ENCODE measurements at regions of chr2 and their contacts with region 1.

Region 1: DNA sequence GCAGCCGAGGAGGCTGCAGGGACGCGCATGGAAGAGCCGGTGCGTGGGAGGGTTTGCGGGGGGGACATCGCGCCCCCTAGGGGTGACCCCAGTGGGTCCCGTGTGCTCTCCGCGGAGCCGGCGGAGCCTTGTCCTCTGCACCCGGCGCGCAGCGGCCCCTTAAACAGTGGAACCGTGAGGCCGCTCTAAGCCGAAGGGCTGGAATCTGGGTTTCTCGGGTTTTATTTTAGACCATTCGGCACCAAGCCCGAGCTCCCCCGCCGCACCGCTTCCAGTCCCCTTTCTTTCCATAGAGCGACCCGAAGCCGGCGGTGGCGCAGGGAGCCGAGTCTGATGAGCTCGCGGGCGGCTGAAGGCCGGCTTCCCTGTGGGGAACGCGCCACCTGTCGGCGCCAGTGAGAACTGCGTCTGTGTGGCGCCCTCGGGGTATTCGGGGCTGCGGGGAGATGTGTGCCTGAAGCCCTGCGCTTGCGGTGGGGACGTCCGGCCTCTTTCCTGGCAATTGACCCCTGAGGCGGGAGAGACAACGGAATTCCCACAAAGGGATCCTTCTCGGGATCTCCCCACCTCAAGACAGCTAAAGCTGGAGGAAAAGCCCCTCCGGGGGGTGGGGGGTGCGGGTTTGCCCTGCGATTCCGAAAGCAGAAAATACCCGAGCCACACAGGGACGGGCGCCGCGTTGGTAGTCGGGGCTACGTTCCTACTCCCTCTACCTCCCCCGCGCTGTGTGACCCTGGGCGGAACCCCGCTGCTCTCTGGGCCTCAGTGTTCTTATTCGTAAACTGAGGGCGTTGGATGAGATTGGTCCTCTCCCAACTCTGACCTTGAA is 8.2 kb upstream of the EN1 start:
- DNase-seq: peak; percentile 88
- ATAC-seq: peak; percentile 89
- H3K4me3 ChIP-seq: peak overlapping the region; percentile 72
- H3K27ac ChIP-seq: no peak overlapping the region
- H3K4me1 ChIP-seq: 0 out of 2 replicates have a peak, but pooled peaks cover under 1% of the 10 kb centered on the region
- H3K27me3 ChIP-seq: peaks cover 28% of the 10 kb centered on the region
- CTCF ChIP-seq: peak; percentile 89

Region 2: GRCh38 chr2:118371515-118371914 is 484.1 kb before region 1 on chr2:
- CTCF ChIA-PET with region 1: interaction called, 4 read pairs
- POLR2A ChIA-PET with region 1: no interaction called
- intact Hi-C with region 1: loop called (anchors 2 kb)
- DNase-seq: peak; percentile 75
- ATAC-seq: peak; percentile 92
- H3K4me3 ChIP-seq: no peak overlapping the region
- H3K27ac ChIP-seq: no peak overlapping the region
- H3K4me1 ChIP-seq: peaks cover 19% of the 10 kb centered on the region
- H3K27me3 ChIP-seq: no peaks in the 10 kb centered on the region
- CTCF ChIP-seq: peak; percentile 95

Region 3: GRCh38 chr2:118431165-118431517 is 424.5 kb before region 1 on chr2:
- CTCF ChIA-PET with region 1: interaction called, 11 read pairs
- POLR2A ChIA-PET with region 1: no interaction called
- intact Hi-C with region 1: no loop called
- DNase-seq: peak; percentile 46
- ATAC-seq: peak; percentile 39
- H3K4me3 ChIP-seq: no peak overlapping the region
- H3K27ac ChIP-seq: peak overlapping the region; percentile 91
- H3K4me1 ChIP-seq: peaks cover 22% of the 10 kb centered on the region
- H3K27me3 ChIP-seq: no peaks in the 10 kb centered on the region
- CTCF ChIP-seq: peak; percentile 50

Region 4: GRCh38 chr2:118492335-118492734 is 363.3 kb before region 1 on chr2:
- CTCF ChIA-PET with region 1: interaction called, 5 read pairs
- POLR2A ChIA-PET with region 1: no interaction called
- intact Hi-C with region 1: loop called (anchors 1 kb)
- DNase-seq: peak; percentile 77
- ATAC-seq: peak; percentile 37; the same call in 1 of the 2 replicates
- H3K4me3 ChIP-seq: no peak overlapping the region
- H3K27ac ChIP-seq: no peak overlapping the region
- H3K4me1 ChIP-seq: no peaks in the 10 kb centered on the region
- H3K27me3 ChIP-seq: no peaks in the 10 kb centered on the region; the same call in 1 of the 2 replicates
- CTCF ChIP-seq: peak; percentile 69

Region 5: DNA sequence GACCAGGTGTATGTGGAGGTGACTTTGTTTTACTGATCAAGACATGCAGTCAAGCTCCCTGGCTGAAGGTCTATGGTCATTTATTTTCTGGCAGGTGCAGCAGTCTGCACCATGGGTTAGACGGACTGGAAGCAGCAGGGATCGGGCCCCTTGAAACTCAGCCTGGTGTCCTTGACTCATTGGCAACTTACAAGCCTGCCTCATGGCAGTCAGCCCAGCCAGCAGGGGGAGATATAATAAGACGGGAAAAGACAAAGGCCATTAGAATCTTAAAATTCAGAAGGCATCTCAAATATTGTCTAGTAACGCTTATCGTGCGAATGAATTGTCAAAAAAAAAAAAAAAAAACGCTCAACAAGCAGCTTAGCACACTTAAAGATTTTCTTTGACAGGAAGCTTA is 316.4 kb before region 1 on chr2:
- CTCF ChIA-PET with region 1: no interaction called
- POLR2A ChIA-PET with region 1: no interaction called
- intact Hi-C with region 1: loop called (anchors 5 kb)
- DNase-seq: peak; percentile 57
- ATAC-seq: peak; percentile 27; the same call in 1 of the 2 replicates
- H3K4me3 ChIP-seq: no peak overlapping the region
- H3K27ac ChIP-seq: no peak overlapping the region
- H3K4me1 ChIP-seq: no peaks in the 10 kb centered on the region
- H3K27me3 ChIP-seq: 0 out of 2 replicates have a peak, but pooled peaks cover 11% of the 10 kb centered on the region
- CTCF ChIP-seq: peak; percentile 79

Region 6: DNA sequence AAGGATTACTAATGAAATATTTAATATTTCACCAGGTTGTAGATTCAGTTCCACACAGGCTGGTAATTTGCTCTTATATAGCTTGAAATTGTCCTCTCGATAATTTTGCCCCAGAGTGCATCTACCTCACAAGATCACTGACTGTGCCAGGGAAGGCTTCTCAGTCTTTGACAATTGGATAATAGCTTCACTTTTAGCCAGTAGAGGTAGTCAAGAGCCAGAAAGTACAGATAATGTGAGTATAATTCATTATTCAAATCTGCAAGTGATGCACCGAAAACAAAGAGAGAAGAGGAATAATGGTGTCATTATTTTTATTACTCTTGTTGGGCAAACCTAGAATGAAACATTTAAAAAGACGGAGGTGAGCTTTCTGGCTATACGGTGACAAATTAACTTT is 301.0 kb before region 1 on chr2:
- CTCF ChIA-PET with region 1: interaction called, 10 read pairs
- POLR2A ChIA-PET with region 1: no interaction called
- intact Hi-C with region 1: loop called (anchors 1 kb)
- DNase-seq: peak; percentile 36
- ATAC-seq: peak; percentile 57
- H3K4me3 ChIP-seq: no peak overlapping the region
- H3K27ac ChIP-seq: no peak overlapping the region
- H3K4me1 ChIP-seq: peaks cover 6% of the 10 kb centered on the region; the same call in 1 of the 2 replicates
- H3K27me3 ChIP-seq: no peaks in the 10 kb centered on the region
- CTCF ChIP-seq: peak; percentile 59

Region 7: DNA sequence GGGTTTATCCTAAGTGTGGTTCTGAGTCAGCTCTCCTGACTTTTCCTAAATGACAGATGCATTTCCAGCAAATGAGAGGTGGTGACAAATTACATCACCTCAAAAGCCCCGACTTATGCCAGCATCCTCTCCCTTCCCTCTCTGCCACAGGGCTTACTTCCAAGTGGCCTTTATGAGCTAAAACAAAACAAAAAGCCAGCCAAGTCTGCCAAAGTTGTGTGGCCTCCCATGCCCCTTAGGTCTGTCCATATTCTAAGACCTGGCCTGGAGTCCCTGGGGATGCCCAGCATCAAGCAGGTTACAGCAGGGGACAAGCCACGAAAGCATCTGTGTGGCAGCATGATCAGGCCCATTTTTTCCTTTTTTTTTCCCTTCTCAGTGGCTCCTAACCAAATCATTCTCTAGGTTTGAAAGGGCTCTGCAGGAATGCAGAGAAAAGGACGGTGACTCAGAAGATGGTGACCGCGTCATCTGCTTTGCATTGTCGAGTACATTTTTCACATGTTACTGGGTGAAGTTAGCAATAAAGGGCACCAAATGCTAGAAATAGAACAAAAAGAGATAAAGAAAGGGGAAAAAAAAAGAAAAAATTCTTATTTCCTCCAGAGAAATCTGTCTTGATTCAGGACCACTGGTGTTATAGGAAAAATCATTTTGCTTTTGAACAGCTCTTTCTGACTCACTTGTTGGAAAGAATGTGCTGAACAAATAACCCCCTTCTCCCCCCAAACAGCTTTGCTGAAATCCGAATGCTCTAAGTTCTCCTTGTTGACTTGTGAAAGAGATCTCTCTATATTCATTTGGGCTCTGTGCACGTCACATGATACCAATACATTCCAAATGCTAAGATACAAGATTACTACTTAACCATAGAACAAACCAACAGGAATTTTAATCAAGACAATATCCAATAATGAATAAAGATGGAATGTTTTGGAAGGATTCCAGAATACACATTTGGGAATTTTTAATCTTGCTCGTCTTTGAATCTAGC is 186.9 kb before region 1 on chr2:
- CTCF ChIA-PET with region 1: no interaction called
- POLR2A ChIA-PET with region 1: no interaction called
- intact Hi-C with region 1: loop called (anchors 1 kb)
- DNase-seq: peak; percentile 91
- ATAC-seq: peak; percentile 89
- H3K4me3 ChIP-seq: peak overlapping the region; percentile 54
- H3K27ac ChIP-seq: peak overlapping the region; percentile 89
- H3K4me1 ChIP-seq: peaks cover 28% of the 10 kb centered on the region
- H3K27me3 ChIP-seq: no peaks in the 10 kb centered on the region
- CTCF ChIP-seq: no peak

Measured in PC-3 (cell line).